IMR-90 (cell line): ENCODE measurements at regions of chr4 and their contacts with region 1.

Region 1: DNA sequence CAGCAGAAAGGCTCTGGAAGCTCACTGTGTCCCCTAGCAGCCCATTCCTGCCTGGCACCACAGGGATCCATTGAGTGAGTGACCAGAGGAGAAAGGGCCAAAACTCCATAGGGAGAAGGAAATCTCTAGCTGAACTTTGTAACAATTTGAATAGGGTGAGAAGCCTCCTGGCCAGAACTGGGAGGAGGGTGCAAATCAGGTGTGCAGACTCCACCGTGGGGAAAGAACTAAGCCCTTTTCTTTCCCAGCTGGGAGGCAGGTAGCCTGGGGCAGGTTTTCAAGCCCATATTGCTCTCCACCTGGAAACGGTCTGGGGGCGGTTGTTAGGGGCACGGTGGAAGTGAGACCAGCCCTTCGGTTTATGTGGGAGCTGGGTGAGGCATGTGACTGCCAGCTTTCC is 227.2 kb downstream of the SNCA start:
- DNase-seq: no peak
- ATAC-seq: no peak
- H3K4me3 ChIP-seq: no peak overlapping the region
- H3K27ac ChIP-seq: no peak overlapping the region
- H3K4me1 ChIP-seq: no peaks in the 10 kb centered on the region
- H3K27me3 ChIP-seq: no peaks in the 10 kb centered on the region
- CTCF ChIP-seq: no peak
- POLR2A ChIP-seq: no peak
- RAD21 ChIP-seq: no peak

Region 2: GRCh38 chr4:89625599-89626298 is 16.0 kb after region 1 on chr4:
- CTCF ChIA-PET with region 1: no interaction called
- POLR2A ChIA-PET with region 1: no interaction called
- dilution Hi-C with region 1: no loop called
- in situ Hi-C with region 1: no loop called
- intact Hi-C with region 1: loop called (anchors 2 kb)
- DNase-seq: no peak
- ATAC-seq: no peak
- H3K4me3 ChIP-seq: no peak overlapping the region
- H3K27ac ChIP-seq: no peak overlapping the region
- H3K4me1 ChIP-seq: no peaks in the 10 kb centered on the region
- H3K27me3 ChIP-seq: no peaks in the 10 kb centered on the region
- CTCF ChIP-seq: no peak
- POLR2A ChIP-seq: no peak
- RAD21 ChIP-seq: no peak

Region 3: DNA sequence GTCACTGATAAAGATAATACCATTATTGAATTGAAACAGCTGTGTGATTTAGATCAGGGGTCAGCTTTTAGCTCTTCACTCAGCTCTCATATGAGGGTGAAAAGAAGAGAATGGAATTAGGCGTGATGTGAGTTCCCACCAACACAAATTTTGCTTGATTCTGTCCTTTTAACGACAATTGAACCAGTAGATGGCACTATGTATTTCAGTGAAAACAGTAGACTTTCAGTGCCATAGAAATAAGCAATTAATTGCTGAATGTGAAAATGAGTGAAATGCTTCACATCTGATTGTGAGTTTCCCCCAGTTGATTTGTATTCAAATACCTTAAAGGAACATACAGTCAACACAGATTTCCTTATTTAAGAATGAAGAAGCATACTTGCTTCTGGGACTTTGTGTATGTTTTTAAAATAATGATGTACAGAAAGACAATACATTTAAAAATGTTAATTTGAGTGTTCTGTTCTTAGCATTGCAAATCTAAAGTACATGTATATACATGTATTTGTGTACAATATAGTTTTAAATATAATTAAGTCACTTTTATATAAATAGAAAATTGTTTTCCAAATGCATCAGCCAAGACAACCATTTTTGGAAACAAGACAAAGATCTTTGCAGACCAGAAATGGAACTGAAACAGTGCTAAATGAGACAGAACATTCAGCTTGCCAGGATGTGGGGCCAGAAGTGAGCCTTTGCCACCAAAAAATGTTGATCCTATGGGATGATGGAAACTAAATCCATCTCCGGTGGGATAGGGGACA is 48.4 kb after region 1 on chr4:
- CTCF ChIA-PET with region 1: no interaction called
- POLR2A ChIA-PET with region 1: no interaction called
- dilution Hi-C with region 1: no loop called
- in situ Hi-C with region 1: no loop called
- intact Hi-C with region 1: no loop called
- DNase-seq: peak; percentile 46
- ATAC-seq: no peak
- H3K4me3 ChIP-seq: no peak overlapping the region
- H3K27ac ChIP-seq: no peak overlapping the region
- H3K4me1 ChIP-seq: no peaks in the 10 kb centered on the region; the same call in 1 of the 2 replicates
- H3K27me3 ChIP-seq: no peaks in the 10 kb centered on the region; the same call in 1 of the 2 replicates
- CTCF ChIP-seq: peak; percentile 52
- POLR2A ChIP-seq: no peak
- RAD21 ChIP-seq: peak; percentile 57